ENCODE measurements at regions of chr2 and their contacts with region 1.

Region 1: GRCh38 chr2:167964650-167965413 is 282.6 kb downstream of the STK39 start:
- DNase-seq: peak; percentile 23

Region 2: DNA sequence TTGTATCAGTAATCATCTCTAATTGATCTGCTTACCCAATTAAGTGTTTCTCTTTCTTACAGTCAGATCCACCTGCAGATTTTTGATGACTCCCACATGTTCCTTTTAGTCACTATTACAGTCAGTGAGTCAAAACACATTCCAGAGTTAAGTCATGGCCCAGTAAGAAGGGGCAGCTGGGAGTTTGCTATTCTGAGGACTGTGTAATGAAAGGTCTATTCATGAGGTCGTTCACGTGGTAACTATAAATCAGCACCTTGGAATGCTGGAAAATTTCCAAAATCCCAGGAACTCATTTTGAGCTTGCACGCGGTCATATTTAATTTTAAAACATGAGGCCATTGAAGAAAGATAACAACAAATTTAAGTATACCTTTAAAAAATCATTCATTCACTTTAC is 824.1 kb before region 1 on chr2:
- in situ Hi-C with region 1: no loop called
- DNase-seq: no peak

Region 3: GRCh38 chr2:167310442-167310841 is 654.4 kb before region 1 on chr2:
- in situ Hi-C with region 1: no loop called
- DNase-seq: no peak

Region 4: GRCh38 chr2:167554830-167555720 is 409.8 kb before region 1 on chr2:
- in situ Hi-C with region 1: no loop called
- DNase-seq: no peak

Region 5: GRCh38 chr2:168118733-168119514 is 154.1 kb after region 1 on chr2:
- in situ Hi-C with region 1: loop called (anchors 25 kb)
- DNase-seq: peak; percentile 77